ENCODE measurements at regions of chr16 and their contacts with region 1.

Region 1: GRCh38 chr16:56191156-56191815 is at the start of gene GNAO1:
- DNase-seq: peak; percentile 71
- ATAC-seq: peak; percentile 49
- H3K4me3 Mint-ChIP-seq: peak within 1 kb of the TSS; percentile 77
- H3K27ac Mint-ChIP-seq: no peak within 1 kb of the TSS
- H3K4me1 Mint-ChIP-seq: peaks cover 42% of the 10 kb centered on the region
- H3K27me3 Mint-ChIP-seq: peaks cover 39% of the 10 kb centered on the region
- CTCF ChIP-seq: no peak
- total RNA-seq, gene GNAO1: 22.9 to 30.6 TPM (median 23.6 TPM) in 3 replicates

Region 2: DNA sequence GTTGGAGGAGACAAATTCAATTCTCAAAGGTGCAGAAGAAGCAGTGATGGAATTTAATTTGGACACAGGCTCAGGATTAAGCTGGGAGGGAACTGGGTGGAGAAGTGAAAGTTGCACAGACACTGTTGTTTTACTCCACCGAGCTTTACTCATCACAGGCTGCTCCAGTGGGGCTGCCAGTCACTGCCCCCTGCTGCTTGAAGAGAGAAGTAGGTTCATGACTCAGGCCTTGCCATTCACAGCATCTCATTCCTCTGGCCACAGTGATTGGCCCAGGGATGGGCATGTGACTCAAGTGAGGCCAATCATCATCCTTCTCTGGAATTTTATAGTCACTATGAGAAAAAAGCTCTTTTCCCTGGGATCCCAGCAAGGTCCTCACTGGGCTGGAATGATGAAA is 11.8 kb after region 1 on chr16:
- CTCF ChIA-PET with region 1: interaction called, 11 read pairs
- POLR2A ChIA-PET with region 1: no interaction called
- DNase-seq: peak; percentile 45
- ATAC-seq: peak; percentile 95
- H3K4me3 Mint-ChIP-seq: no peak overlapping the region
- H3K27ac Mint-ChIP-seq: no peak overlapping the region
- H3K4me1 Mint-ChIP-seq: peaks cover 12% of the 10 kb centered on the region
- H3K27me3 Mint-ChIP-seq: no peaks in the 10 kb centered on the region
- CTCF ChIP-seq: no peak

Region 3: GRCh38 chr16:56370877-56371659 is 179.8 kb after region 1 on chr16:
- CTCF ChIA-PET with region 1: no interaction called
- POLR2A ChIA-PET with region 1: no interaction called
- DNase-seq: no peak
- ATAC-seq: no peak
- H3K4me3 Mint-ChIP-seq: no peak overlapping the region
- H3K27ac Mint-ChIP-seq: no peak overlapping the region
- H3K4me1 Mint-ChIP-seq: peaks cover 9% of the 10 kb centered on the region; the same call in 1 of the 2 replicates
- H3K27me3 Mint-ChIP-seq: no peaks in the 10 kb centered on the region
- CTCF ChIP-seq: no peak

Region 4: GRCh38 chr16:56450275-56450985 is 259.1 kb after region 1 on chr16:
- CTCF ChIA-PET with region 1: no interaction called
- POLR2A ChIA-PET with region 1: no interaction called
- DNase-seq: no peak
- ATAC-seq: no peak
- H3K4me3 Mint-ChIP-seq: peak overlapping the region; percentile 97
- H3K27ac Mint-ChIP-seq: peak overlapping the region; percentile 85
- H3K4me1 Mint-ChIP-seq: peaks cover 20% of the 10 kb centered on the region
- H3K27me3 Mint-ChIP-seq: no peaks in the 10 kb centered on the region
- CTCF ChIP-seq: no peak